ENCODE measurements at regions of chr1 and their contacts with region 1.

Region 1: DNA sequence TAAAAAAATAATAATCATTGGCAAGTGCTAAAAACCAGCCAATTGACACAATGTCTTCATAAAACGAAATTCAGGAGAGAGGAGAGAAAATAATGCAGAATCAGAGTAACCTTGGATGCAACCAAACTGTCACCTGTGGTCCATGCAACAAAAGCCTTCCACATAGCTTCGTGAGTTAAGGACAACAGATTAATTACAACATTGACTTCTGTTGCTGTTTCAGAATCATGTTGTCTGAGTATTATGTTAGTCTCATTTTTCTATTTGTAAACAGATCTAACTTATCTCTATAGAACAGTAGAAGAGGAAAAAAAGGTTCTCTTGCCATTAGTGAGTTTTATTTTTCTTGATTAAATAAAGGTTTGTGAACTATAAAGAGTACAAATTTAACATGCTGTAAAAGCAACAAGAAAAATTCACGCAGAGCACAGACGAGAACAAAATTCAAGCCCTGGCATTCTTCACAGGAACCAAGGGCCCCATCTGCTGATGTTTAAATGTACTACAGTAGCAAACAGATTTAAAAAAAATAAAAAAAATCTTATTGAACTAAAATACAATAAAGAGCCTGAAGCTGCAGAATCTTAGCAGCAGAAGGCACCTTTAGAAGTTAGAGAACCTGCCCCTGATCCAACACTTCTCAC is 381.1 kb upstream of the PKN2 start:
- DNase-seq: peak; percentile 8
- ATAC-seq: peak; percentile 57
- H3K4me3 ChIP-seq: no peak overlapping the region
- H3K27ac ChIP-seq: no peak overlapping the region
- H3K4me1 ChIP-seq: no peaks in the 10 kb centered on the region
- H3K27me3 ChIP-seq: no peaks in the 10 kb centered on the region; a peak in 1 of 5 replicates
- CTCF ChIP-seq: peak; percentile 21; the same call in 1 of the 2 replicates
- EP300 ChIP-seq: no peak
- POLR2A ChIP-seq: no peak
- RAD21 ChIP-seq: no peak

Region 2: DNA sequence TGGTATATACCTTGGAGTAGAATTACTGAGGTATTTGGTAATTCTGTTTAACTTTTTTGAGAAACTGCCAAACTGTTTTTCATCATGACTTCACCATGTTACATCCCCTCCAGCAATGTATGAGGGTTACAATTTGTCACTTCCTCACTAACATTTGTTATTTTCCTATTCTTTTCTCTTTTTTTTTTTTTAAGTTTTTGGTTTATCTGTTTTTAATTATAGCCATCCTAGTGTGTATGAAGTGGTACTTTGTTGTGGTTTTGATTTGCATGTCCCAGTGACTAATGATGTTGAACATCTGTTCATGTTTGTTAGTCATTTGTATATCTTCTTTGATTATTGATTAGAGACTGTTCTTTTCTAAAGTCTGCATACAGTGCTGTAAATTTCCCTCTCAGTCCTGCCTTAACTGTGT is 1241.2 kb before region 1 on chr1:
- CTCF ChIA-PET with region 1: no interaction called
- POLR2A ChIA-PET with region 1: no interaction called
- in situ Hi-C with region 1: no loop called
- intact Hi-C with region 1: no loop called
- DNase-seq: no peak
- ATAC-seq: no peak
- H3K4me3 ChIP-seq: no peak overlapping the region
- H3K27ac ChIP-seq: no peak overlapping the region
- H3K4me1 ChIP-seq: no peaks in the 10 kb centered on the region
- H3K27me3 ChIP-seq: no peaks in the 10 kb centered on the region
- CTCF ChIP-seq: no peak
- EP300 ChIP-seq: no peak
- POLR2A ChIP-seq: no peak
- RAD21 ChIP-seq: no peak

Region 3: DNA sequence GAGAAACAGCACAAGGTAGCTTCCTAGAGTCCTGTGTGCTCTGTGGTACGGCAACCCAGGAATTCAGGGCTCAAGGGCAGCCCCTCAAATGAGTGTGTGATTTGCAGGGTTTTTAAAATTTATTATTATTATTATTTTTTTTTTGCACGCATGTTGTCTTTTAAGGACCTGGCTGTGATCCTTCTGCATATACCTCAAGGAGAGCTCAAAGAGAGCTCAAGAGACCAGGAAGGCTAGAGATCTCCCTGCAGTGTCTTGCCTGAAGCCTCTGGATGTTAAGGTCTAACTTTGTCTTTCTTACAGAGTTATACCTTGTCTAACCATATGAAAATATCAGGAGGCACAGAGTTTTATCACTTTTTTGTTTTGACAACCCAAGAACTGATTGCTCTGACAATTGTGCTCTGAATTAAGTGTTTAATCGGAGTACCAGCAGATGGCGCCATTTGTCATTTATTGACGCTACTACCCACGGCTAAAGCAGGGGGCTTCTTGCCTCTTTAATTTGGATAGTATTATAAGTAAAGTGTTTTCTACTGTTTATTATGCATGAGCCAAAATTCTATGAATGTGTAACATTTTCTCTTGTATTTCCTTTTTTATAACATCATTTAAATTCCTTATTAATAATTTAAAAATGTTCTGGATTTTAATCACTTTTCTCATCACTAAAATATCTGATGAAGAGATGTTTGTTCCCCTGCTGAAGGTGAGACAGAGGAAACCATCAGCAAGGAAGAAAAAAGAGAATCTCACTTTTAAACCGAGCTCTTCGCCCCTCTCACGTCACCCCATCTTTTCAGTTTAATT is 1010.1 kb before region 1 on chr1:
- CTCF ChIA-PET with region 1: no interaction called
- POLR2A ChIA-PET with region 1: no interaction called
- in situ Hi-C with region 1: no loop called
- intact Hi-C with region 1: loop called (anchors 2 kb)
- DNase-seq: peak; percentile 54
- ATAC-seq: peak; percentile 80
- H3K4me3 ChIP-seq: no peak overlapping the region
- H3K27ac ChIP-seq: no peak overlapping the region
- H3K4me1 ChIP-seq: no peaks in the 10 kb centered on the region
- H3K27me3 ChIP-seq: no peaks in the 10 kb centered on the region; a peak in 1 of 5 replicates
- CTCF ChIP-seq: peak; percentile 75
- EP300 ChIP-seq: no peak
- POLR2A ChIP-seq: no peak
- RAD21 ChIP-seq: peak; percentile 46; the same call in 1 of the 2 replicates

Region 4: DNA sequence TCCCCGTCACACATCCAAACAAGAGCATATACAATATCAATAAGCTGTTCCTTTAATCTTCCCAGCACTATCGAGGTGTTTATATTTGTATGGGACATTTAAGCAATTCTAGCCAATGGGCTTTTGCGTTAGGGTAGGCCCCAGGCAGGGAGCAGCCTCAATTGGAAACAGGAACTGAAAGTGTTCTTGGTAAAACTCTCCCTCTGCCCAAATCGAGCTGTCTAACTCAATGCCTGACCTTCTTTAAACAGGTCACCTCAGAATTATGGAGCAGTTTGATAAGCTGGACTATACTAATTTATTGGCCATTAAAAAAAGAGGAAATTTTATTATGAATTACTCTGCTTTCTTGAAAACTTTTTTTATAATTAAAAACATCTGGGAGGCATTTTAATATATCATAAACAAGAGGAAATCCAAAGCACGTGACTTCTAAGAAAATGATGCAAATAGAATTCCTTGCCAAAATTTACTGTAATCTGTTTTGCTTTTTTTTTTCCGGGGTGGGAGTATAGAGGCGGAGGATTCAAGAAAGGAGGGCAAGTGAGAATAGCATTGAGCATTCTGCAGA is 476.2 kb before region 1 on chr1:
- CTCF ChIA-PET with region 1: no interaction called
- POLR2A ChIA-PET with region 1: no interaction called
- in situ Hi-C with region 1: no loop called
- intact Hi-C with region 1: no loop called
- DNase-seq: peak; percentile 14
- ATAC-seq: peak; percentile 63
- H3K4me3 ChIP-seq: peak overlapping the region in 2 of 3 experiments; percentile 19 to 23; a peak in 2 of 6 replicates
- H3K27ac ChIP-seq: no peak overlapping the region
- H3K4me1 ChIP-seq: 0 out of 2 replicates have a peak, but pooled peaks cover 6% of the 10 kb centered on the region
- H3K27me3 ChIP-seq: no peaks in the 10 kb centered on the region
- CTCF ChIP-seq: no peak
- EP300 ChIP-seq: no peak
- POLR2A ChIP-seq: no peak
- RAD21 ChIP-seq: no peak